ENCODE measurements at regions of chr4 and their contacts with region 1.

Region 1: GRCh38 chr4:87973283-87974169 is 2.0 kb upstream of the SPP1 start:
- DNase-seq: peak; percentile 63
- H3K4me3 ChIP-seq: no peak overlapping the region
- H3K27ac ChIP-seq: no peak overlapping the region
- H3K4me1 ChIP-seq: no peaks in the 10 kb centered on the region
- H3K27me3 ChIP-seq: no peaks in the 10 kb centered on the region
- CTCF ChIP-seq: peak; percentile 58

Region 2: DNA sequence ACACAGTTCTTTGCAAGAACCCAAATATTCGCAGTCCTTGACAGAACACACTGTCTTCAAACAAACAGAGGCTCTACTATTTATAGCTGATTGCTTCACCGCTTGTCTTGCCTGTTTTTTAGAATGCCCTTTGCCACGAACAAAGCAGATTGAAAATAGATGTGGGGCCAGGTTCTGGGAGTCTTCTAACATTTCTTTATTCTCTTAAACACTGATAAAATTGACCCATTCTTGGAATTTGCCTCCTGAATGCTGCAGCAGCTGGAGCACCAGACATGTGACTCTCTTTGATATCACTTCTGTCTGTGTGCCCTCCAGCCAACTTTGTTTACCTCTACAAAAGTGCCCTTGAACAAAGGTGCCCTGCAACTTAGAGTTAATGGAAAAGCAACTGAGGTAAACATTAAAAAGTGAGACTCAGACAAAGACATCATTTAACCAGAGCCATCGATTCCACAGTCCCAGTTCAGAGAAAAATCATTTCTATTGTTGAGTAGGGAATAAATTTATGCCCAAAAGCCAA is 62.2 kb before region 1 on chr4:
- CTCF ChIA-PET with region 1: no interaction called
- POLR2A ChIA-PET with region 1: no interaction called
- intact Hi-C with region 1: no loop called
- DNase-seq: no peak
- H3K4me3 ChIP-seq: no peak overlapping the region
- H3K27ac ChIP-seq: no peak overlapping the region
- H3K4me1 ChIP-seq: no peaks in the 10 kb centered on the region
- H3K27me3 ChIP-seq: no peaks in the 10 kb centered on the region
- CTCF ChIP-seq: no peak

Region 3: DNA sequence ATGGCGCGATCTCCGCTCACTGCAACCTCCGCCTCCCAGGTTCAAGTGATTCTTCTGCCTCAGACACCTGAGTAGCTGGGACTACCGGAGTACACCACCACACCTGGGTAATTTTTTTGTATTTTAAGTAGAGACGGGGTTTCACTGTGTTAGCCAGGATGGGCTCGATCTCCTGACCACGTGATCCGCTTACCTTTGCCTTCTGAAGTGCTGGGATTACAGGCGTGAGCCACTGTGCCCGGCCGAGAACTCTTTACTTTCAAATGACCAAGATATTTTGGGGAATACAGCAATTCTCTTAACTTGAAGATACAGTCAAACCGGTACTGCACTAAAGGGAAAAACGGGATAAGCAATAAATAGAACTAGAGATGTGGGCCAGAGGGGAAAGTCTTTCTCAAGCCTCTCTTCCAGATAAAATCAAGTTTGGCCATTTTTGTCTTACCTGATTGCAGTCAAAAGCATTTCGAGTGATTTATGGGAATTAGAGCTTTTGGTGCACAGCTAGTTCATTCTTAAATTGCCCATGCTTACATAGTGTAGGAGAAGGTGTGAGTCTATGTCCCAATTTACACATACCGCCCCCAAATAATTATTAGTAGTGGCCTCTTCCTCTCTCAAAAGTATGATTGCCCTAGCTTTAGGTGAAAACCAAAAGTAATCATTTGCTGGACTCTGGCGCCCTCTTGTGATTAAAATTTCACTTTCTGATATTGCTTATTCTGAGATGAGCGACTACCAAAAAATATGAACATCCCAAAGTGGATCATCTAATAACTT is 238.1 kb after region 1 on chr4:
- CTCF ChIA-PET with region 1: no interaction called
- POLR2A ChIA-PET with region 1: no interaction called
- intact Hi-C with region 1: loop called (anchors 5 kb)
- DNase-seq: peak; percentile 40
- H3K4me3 ChIP-seq: no peak overlapping the region
- H3K27ac ChIP-seq: no peak overlapping the region
- H3K4me1 ChIP-seq: no peaks in the 10 kb centered on the region
- H3K27me3 ChIP-seq: no peaks in the 10 kb centered on the region
- CTCF ChIP-seq: peak; percentile 56

Measured in A673 (cell line).